ENCODE measurements at regions of chr9 and their contacts with region 1.

Region 1: DNA sequence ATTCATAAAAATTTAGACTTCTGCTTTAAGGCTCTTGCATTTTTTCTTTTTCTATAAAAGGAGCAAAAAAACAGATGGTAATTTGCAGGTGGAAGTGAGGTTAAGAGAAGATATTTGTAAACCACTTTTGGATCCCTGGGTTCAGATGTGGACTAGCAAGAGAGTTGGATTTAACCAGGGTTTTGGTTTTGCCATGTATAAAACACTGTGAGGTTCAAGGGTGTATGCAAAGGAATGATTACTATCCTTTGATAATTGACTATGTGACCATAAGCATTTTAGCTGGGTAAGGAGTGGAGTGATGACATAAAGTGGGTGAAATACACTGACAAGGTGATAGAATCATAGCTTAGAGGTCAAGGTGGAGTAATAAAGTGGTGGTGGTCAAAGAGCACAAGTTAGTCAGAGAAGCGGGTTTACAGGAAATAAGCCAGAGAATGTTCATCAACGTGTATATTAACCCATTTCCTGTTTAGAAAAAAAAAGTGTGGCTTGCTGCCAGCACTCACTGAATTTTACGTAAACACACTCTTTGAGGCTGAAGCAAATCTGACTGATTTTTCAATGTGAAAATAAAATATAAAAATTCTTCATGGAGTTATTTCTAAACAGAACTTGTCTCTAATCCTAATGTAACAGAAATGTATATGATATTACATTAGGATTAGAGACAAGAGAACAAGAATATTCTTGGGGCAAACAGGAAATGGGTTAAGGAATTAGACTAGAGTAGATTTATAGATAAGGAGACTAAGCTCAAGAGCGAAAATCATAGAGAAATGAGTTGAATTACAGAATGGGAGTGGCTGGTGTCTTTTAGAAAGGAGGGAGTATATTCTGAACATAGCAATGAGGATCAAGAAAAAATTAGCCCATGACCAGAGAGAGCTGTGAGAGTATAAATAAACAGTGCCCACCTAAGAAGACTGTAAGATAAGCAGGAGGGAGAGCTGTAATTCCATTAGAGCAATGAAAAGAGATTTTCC is 74.5 kb downstream of the CDKN2A start:
- DNase-seq: peak; percentile 17
- ATAC-seq: peak; percentile 31
- H3K4me3 ChIP-seq: no peak overlapping the region
- H3K4me3 Mint-ChIP-seq: peak overlapping the region; percentile 20
- H3K27ac ChIP-seq: no peak overlapping the region
- H3K27ac Mint-ChIP-seq: no peak overlapping the region
- H3K4me1 ChIP-seq: peaks cover 4 to 7% of the 10 kb centered on the region in 2 donors
- H3K4me1 Mint-ChIP-seq: peaks cover 15% of the 10 kb centered on the region
- H3K27me3 ChIP-seq: no peaks in the 10 kb centered on the region
- H3K27me3 Mint-ChIP-seq: no peaks in the 10 kb centered on the region
- CTCF ChIP-seq: no peak

Region 2: DNA sequence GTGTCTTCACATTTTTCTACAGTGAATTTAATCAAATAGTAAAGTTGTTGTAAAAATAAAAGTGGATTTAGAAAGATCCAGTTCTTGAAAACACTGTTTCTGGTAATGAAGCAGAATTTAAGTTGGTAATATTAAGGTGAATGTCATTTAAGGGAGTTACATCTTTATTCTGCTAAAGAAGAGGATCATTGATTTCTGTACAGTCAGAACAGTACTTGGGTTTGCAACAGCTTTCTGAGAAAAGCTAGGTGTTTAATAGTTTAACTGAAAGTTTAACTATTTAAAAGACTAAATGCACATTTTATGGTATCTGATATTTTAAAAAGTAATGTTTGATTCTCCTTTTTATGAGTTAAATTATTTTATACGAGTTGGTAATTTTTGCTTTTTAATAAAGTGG is 56.8 kb before region 1 on chr9:
- CTCF ChIA-PET with region 1: no interaction called
- POLR2A ChIA-PET with region 1: no interaction called
- intact Hi-C with region 1: loop called (anchors 10 kb)
- DNase-seq: no peak
- ATAC-seq: no peak
- H3K4me3 ChIP-seq: no peak overlapping the region
- H3K4me3 Mint-ChIP-seq: no peak overlapping the region
- H3K27ac ChIP-seq: no peak overlapping the region
- H3K27ac Mint-ChIP-seq: no peak overlapping the region
- H3K4me1 ChIP-seq: peaks cover 0 to 10% of the 10 kb centered on the region in 2 donors
- H3K4me1 Mint-ChIP-seq: peaks cover 11% of the 10 kb centered on the region
- H3K27me3 ChIP-seq: no peaks in the 10 kb centered on the region
- H3K27me3 Mint-ChIP-seq: no peaks in the 10 kb centered on the region
- CTCF ChIP-seq: no peak

Region 3: GRCh38 chr9:22790329-22790728 is 870.7 kb after region 1 on chr9:
- CTCF ChIA-PET with region 1: no interaction called
- POLR2A ChIA-PET with region 1: no interaction called
- intact Hi-C with region 1: no loop called
- DNase-seq: no peak
- ATAC-seq: no peak
- H3K4me3 ChIP-seq: no peak overlapping the region
- H3K4me3 Mint-ChIP-seq: no peak overlapping the region
- H3K27ac ChIP-seq: no peak overlapping the region
- H3K27ac Mint-ChIP-seq: no peak overlapping the region
- H3K4me1 ChIP-seq: no peaks in the 10 kb centered on the region
- H3K4me1 Mint-ChIP-seq: no peaks in the 10 kb centered on the region
- H3K27me3 ChIP-seq: no peaks in the 10 kb centered on the region
- H3K27me3 Mint-ChIP-seq: no peaks in the 10 kb centered on the region
- CTCF ChIP-seq: no peak

Measured in B cell (primary cell).